MCF 10A (cell line): ENCODE measurements at regions of chr1 and their contacts with region 1.

Region 1: DNA sequence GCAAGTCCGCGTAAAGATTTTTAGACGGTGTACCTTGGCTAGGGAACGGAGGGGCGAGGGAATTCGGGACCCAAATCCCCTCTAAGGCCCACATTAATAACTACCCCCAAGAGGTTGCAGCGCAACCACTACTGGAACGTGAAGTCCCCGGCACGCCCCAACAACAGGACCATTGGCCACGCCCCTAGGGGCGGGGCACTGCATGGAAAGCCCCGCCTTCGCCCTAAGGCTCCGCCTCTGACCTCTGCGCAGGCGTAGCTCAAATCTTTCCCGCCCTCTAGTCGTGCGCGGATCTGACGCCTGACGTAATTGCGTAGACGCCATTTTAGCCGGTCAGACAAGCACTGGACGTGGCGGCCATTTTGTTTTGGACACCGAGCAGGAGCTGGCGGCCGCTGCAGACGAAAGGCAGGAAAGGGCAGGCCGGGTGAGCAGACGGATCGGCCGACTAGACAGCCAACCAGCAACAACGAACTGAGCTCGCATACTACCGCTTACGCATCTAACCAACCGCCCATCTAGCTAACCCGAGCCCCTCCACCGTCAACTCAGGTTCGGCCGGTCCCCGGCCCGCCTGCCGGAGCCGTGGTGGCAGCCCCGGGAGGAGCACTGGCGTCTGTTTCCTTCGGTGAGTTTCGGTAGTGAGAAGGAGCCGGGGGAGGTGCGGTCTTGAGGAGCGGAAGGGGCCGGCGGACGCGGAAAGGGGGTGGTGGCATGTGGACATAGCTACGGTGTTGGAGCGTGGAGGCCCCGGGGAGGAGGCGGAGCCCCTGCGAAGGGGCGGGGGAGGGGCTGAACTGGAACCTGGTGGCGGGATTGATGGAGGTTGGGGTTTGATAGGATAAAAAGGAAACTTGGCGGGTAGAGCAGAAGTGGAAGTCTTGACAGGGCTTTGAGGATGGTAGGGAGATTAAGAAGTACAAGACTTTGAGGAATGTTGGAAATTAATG is at the start of gene CHTOP:
- DNase-seq: peak; percentile 99
- H3K4me3 Mint-ChIP-seq: peak within 1 kb of the TSS; percentile 97
- H3K27ac Mint-ChIP-seq: peak within 1 kb of the TSS; percentile 100
- H3K4me1 Mint-ChIP-seq: peaks cover 32% of the 10 kb centered on the region
- H3K27me3 Mint-ChIP-seq: no peaks in the 10 kb centered on the region
- CTCF ChIP-seq: no peak
- total RNA-seq, gene CHTOP: 147 and 156 TPM in 2 replicates

Region 2: DNA sequence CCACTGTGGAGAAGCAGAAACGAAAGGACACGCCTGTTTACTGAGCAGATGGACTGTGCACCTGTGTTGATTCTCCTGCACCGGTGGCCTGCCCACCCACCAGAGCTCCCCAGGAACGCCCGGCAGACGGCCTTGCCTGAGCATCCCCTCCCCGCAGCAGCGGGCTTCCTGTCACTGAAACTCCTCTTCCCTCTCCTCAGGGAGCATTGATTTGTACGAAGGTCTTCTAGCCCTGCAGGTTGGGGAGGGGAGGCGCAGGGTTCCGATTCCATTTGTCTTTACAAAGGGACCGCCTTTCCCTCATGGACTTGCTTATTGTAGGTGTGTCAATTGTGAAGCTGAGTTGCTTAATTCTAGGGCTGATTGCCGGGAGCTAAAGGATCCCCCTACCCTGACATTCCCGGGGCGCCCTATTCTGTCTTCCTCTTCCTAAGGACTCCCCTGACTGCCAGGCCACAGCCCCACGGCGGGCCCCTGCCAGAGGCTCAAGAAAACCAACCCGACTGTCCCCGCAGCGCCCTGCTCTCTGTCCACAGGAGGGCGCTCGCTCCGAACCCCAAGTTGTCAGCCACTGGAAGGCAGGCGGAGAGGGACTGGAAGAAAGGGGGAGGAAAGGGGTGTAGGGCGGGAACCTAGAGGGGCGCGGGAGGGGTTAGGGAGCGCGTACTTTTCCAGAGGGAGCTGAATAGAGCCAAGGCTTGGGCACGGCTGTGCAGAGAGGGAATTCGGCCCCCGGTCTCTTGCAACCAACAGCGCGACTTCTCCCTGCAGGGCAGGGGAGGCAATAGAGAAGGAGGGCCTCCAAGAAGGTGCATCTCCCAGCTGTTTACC is 101.0 kb before region 1 on chr1:
- CTCF ChIA-PET with region 1: interaction called, 5 read pairs
- POLR2A ChIA-PET with region 1: interaction called, 25 read pairs
- intact Hi-C with region 1: no loop called
- DNase-seq: peak; percentile 97
- H3K4me3 Mint-ChIP-seq: peak overlapping the region; percentile 99
- H3K27ac Mint-ChIP-seq: peak overlapping the region; percentile 75
- H3K4me1 Mint-ChIP-seq: peaks cover 47% of the 10 kb centered on the region
- H3K27me3 Mint-ChIP-seq: no peaks in the 10 kb centered on the region
- CTCF ChIP-seq: peak; percentile 93

Region 3: DNA sequence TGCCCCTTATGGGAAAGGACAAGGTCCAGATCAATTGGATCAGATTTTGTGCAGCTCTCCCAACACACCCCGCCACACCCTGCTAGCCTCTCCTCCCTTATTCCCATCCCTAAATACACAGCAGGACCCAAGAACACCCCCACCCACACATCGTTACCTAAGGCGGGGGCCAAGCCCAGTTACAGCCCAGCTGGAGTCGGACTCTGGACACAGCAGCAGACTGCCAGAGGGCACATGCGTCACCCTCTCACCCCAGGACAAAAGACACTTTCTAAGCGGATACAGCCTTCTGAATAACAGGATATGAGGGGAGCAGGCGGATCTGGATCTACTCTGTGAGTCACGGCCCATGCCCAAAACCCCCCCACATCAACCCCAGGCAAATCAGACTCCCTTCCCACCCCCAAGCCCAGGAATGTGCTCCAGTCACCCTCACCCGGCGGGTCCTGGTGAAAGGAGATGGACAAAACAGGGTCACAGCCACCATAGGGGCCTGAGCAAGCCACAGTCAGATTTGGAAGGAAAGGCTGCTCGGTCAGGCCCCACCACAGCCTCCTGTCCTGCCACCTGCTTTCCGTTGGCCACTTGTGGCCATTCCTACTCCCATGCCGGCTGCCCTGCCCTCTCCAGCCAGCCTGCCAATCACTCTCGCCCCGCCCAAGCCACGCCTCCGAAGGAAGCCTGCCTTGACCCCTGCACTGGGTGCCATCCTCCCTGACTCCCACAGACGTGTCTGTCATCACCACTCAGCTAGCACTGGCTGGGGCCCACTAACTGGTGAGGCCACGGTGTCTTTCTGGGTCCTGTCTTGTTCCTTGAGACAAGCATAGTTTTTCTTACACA is 25.0 kb before region 1 on chr1:
- CTCF ChIA-PET with region 1: interaction called, 195 read pairs
- POLR2A ChIA-PET with region 1: interaction called, 1,272 read pairs
- intact Hi-C with region 1: loop called (anchors 1 kb)
- DNase-seq: peak; percentile 99
- H3K4me3 Mint-ChIP-seq: peak overlapping the region; percentile 90
- H3K27ac Mint-ChIP-seq: peak overlapping the region; percentile 94
- H3K4me1 Mint-ChIP-seq: peaks cover 45% of the 10 kb centered on the region
- H3K27me3 Mint-ChIP-seq: no peaks in the 10 kb centered on the region
- CTCF ChIP-seq: no peak

Region 4: GRCh38 chr1:153658400-153659174 is 24.6 kb after region 1 on chr1 and contains the start of gene SNAPIN:
- CTCF ChIA-PET with region 1: interaction called, 3 read pairs
- POLR2A ChIA-PET with region 1: interaction called, 1,272 read pairs
- intact Hi-C with region 1: no loop called
- DNase-seq: peak; percentile 95
- H3K4me3 Mint-ChIP-seq: peak within 1 kb of the TSS; percentile 92
- H3K27ac Mint-ChIP-seq: peak within 1 kb of the TSS; percentile 91
- H3K4me1 Mint-ChIP-seq: peaks cover 5% of the 10 kb centered on the region
- H3K27me3 Mint-ChIP-seq: no peaks in the 10 kb centered on the region
- CTCF ChIP-seq: no peak
- total RNA-seq, gene SNAPIN: 55.9 and 63.7 TPM in 2 replicates

Region 5: GRCh38 chr1:153967082-153968000 is 333.4 kb after region 1 on chr1 and contains the start of gene CREB3L4:
- CTCF ChIA-PET with region 1: no interaction called
- POLR2A ChIA-PET with region 1: interaction called, 17 read pairs
- intact Hi-C with region 1: no loop called
- DNase-seq: peak; percentile 100
- H3K4me3 Mint-ChIP-seq: peak within 1 kb of the TSS; percentile 95
- H3K27ac Mint-ChIP-seq: peak within 1 kb of the TSS; percentile 94
- H3K4me1 Mint-ChIP-seq: peaks cover 40% of the 10 kb centered on the region
- H3K27me3 Mint-ChIP-seq: no peaks in the 10 kb centered on the region
- CTCF ChIP-seq: peak; percentile 32
- total RNA-seq, gene CREB3L4: 14.7 and 17.6 TPM in 2 replicates